MCF 10A (cell line): ENCODE measurements at regions of chr1 and their contacts with region 1.

Region 1: GRCh38 chr1:243343970-243344937 is 88.4 kb downstream of the SDCCAG8 start:
- DNase-seq: peak; percentile 79
- H3K4me3 Mint-ChIP-seq: no peak overlapping the region
- H3K27ac Mint-ChIP-seq: no peak overlapping the region
- H3K4me1 Mint-ChIP-seq: peaks cover 5% of the 10 kb centered on the region
- H3K27me3 Mint-ChIP-seq: no peaks in the 10 kb centered on the region
- CTCF ChIP-seq: peak; percentile 91

Region 2: DNA sequence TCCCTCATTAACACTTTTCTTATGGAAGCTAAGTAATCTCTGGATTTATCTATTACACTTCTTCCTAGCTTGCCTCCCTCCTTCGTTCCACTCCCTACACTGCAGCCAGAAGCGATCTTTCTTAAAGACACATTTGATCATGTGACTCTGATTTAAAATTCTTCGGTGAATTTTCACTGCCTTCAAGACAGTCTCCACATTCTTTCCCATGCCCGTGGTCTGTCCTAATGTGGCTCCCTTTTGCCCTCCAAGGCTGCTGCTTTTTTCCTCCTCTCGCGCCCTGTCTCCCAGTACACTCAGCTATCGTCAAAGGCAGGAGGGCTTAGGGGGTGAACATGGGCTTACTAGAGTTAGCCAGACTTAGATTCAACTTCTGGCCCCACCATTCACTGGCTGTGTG is 24.0 kb before region 1 on chr1:
- CTCF ChIA-PET with region 1: interaction called, 12 read pairs
- POLR2A ChIA-PET with region 1: interaction called, 4 read pairs
- intact Hi-C with region 1: no loop called
- DNase-seq: no peak
- H3K4me3 Mint-ChIP-seq: no peak overlapping the region
- H3K27ac Mint-ChIP-seq: no peak overlapping the region
- H3K4me1 Mint-ChIP-seq: peaks cover 6% of the 10 kb centered on the region
- H3K27me3 Mint-ChIP-seq: no peaks in the 10 kb centered on the region
- CTCF ChIP-seq: no peak

Region 3: DNA sequence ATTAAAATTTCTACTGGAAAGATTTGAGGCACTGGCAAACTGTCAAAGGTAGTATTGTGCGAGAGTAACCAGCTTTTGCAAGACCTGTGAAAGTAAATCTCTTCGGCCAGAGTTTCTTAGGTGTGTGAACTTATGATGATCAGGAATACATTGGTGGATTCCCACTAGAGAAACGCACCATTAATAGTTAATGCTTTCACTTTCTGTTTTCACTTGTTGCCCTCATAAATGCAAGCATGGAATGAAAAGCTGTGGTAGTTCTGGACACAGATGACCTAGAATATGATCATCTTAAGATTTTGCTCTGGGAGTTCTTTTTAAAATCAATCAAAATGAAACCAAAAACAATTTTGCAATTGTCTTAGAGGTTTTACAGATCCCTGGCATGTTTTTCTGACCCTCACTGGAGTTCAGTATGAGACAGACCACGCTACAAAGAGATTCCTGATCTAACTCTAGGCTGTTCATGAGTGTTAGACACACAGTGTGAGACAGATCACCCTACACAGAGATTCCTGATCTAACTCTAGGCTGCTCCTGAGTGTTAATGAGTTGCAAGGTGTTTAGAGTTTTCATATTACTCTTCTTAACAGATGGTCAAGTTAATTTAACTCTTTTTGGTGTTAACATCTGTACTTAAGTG is 10.4 kb after region 1 on chr1:
- CTCF ChIA-PET with region 1: interaction called, 30 read pairs
- POLR2A ChIA-PET with region 1: no interaction called
- intact Hi-C with region 1: no loop called
- DNase-seq: no peak
- H3K4me3 Mint-ChIP-seq: no peak overlapping the region
- H3K27ac Mint-ChIP-seq: no peak overlapping the region
- H3K4me1 Mint-ChIP-seq: no peaks in the 10 kb centered on the region
- H3K27me3 Mint-ChIP-seq: no peaks in the 10 kb centered on the region
- CTCF ChIP-seq: no peak

Region 4: GRCh38 chr1:243708210-243708609 is 364.0 kb after region 1 on chr1:
- CTCF ChIA-PET with region 1: interaction called, 3 read pairs
- POLR2A ChIA-PET with region 1: interaction called, 3 read pairs
- intact Hi-C with region 1: loop called (anchors 1 kb)
- DNase-seq: peak; percentile 32
- H3K4me3 Mint-ChIP-seq: no peak overlapping the region
- H3K27ac Mint-ChIP-seq: no peak overlapping the region
- H3K4me1 Mint-ChIP-seq: no peaks in the 10 kb centered on the region
- H3K27me3 Mint-ChIP-seq: no peaks in the 10 kb centered on the region
- CTCF ChIP-seq: peak; percentile 79

Region 5: DNA sequence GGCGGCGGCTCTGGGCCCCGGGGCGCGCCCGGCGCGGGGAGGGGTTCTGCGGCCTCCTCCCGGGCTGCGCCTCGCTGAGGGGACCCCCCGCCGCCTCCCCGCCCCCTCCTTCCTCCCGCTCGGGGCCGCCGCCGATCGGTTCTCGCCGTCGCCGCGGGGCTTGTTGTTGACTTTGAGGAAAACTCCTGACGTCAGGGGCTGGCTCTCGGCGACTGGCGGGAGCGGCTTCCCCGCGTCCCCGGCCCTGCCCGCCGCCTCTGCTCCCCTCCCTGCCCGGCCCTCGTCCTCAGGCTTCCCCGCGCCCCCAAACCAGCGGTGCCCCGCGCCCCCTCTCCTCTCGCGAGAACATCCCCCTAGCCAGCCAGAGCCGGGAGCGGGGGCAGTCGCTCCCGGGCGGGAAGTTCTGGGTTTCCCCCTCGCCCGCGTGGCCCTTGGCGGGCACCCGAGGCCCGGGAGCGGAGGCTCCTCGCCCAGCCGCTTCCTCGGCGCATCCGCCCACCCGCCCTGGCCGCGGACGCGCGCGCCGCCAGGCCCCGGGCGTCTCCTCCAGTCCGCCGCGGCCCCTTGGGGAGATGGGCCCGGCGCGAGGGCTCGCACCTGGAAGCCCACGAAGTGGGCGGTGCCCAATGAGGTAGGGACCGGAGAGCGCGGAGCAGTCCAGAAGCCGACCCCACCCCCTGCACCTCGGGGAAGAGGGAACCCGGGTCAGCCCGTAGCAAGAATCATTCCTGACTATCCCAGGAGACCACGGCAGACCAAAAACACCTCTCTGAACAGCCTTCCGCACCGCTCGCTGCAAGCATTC is 506.4 kb after region 1 on chr1:
- CTCF ChIA-PET with region 1: interaction called, 5 read pairs
- POLR2A ChIA-PET with region 1: interaction called, 4 read pairs
- intact Hi-C with region 1: loop called (anchors 5 kb)
- DNase-seq: peak; percentile 85
- H3K4me3 Mint-ChIP-seq: peak overlapping the region; percentile 88
- H3K27ac Mint-ChIP-seq: peak overlapping the region; percentile 46
- H3K4me1 Mint-ChIP-seq: peaks cover 20% of the 10 kb centered on the region
- H3K27me3 Mint-ChIP-seq: peaks cover 64% of the 10 kb centered on the region
- CTCF ChIP-seq: no peak

Region 6: DNA sequence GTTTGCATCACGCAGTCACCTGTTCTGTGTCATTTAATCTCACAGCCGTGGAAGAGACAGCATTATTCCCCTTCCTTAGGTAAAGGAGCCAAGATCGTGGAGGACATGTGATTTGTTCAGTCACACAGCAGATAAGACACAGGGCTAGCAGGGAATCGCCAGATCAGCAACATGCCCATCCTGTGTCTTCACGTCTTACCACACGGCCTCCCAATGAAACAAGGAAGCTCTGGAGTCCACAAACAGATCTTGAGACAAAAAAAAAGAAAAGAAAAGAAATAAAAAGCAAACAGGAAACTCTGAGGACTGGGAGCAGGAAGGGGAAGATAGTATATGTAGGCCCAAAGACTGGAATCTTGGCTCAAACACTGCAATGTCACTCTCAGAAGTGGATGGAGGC is 952.2 kb after region 1 on chr1:
- CTCF ChIA-PET with region 1: interaction called, 42 read pairs
- POLR2A ChIA-PET with region 1: interaction called, 4 read pairs
- intact Hi-C with region 1: loop called (anchors 1 kb)
- DNase-seq: no peak
- H3K4me3 Mint-ChIP-seq: no peak overlapping the region
- H3K27ac Mint-ChIP-seq: peak overlapping the region; percentile 36
- H3K4me1 Mint-ChIP-seq: peaks cover 8% of the 10 kb centered on the region
- H3K27me3 Mint-ChIP-seq: no peaks in the 10 kb centered on the region
- CTCF ChIP-seq: no peak

Region 7: DNA sequence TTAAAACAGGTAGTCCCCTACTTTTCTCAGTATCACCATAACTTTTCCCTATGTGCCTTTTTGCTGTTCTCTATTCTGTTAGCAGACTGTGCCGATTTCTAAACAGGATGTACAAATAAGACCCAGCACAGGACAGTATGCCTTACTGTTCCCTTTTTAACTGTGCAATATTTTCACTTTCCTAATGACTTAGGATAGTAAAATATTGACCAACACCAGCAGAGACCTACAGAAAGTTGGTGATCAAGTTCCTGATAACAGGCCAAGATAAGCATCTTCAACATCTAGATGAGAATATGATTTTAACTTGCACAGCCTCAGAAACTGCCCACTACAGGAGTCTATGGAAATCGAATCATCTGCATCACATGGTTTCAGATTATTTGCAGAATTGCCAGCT is 1065.4 kb after region 1 on chr1:
- CTCF ChIA-PET with region 1: no interaction called
- POLR2A ChIA-PET with region 1: no interaction called
- intact Hi-C with region 1: loop called (anchors 5 kb)
- DNase-seq: no peak
- H3K4me3 Mint-ChIP-seq: no peak overlapping the region
- H3K27ac Mint-ChIP-seq: no peak overlapping the region
- H3K4me1 Mint-ChIP-seq: peaks cover 16% of the 10 kb centered on the region
- H3K27me3 Mint-ChIP-seq: no peaks in the 10 kb centered on the region
- CTCF ChIP-seq: no peak